ENCODE measurements at regions of chr15 and their contacts with region 1.

Region 1: GRCh38 chr15:92077353-92078085 is 224.0 kb downstream of the SLCO3A1 start:
- DNase-seq: peak; percentile 80 to 85
- ATAC-seq: peak; percentile 68
- H3K4me3 ChIP-seq: no peak overlapping the region
- H3K27ac ChIP-seq: no peak overlapping the region
- H3K4me1 ChIP-seq: no peaks in the 10 kb centered on the region
- H3K27me3 ChIP-seq: no peaks in the 10 kb centered on the region

Region 2: DNA sequence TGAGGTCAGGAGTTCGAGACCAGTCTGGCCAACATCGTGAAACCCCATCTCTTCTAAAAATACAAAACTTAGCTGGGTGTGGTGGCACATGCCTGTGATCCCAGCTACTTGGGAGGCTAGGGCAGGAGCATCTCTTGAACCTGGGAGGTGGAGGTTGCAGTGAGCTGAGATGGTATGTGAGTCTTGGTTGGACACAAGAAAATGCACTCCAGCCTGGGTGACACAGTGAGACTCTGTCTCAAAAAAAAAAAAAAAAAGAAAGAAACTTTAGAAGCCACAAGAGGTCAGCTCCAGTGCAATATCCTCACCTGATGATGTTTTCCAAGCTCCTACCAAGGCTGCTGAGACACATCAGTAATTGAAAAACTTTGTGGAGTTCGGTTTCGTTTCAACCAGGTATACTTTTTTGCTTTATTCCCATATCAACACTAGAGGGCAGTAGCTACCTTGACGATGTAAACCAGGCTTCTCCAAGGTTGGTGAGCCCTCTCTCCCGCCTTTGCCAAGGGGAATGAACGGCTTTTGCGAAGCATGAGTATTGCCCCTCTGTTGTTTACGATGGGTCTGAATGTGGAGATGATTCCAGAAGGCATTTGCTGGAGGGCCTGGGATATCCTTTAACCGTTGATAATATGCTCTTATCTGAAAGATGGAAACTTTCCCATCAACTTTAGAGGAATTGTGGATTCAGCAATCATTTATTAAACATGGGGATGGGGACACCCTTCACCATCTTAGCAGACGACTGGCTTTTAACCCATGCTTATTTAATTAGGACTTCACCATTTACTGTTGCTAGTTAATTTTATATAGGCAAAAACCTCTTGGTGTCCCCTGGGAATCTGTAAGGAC is 774.7 kb before region 1 on chr15:
- intact Hi-C with region 1: loop called (anchors 5 kb)
- DNase-seq: no peak
- ATAC-seq: peak; percentile 78
- H3K4me3 ChIP-seq: no peak overlapping the region
- H3K27ac ChIP-seq: no peak overlapping the region
- H3K4me1 ChIP-seq: no peaks in the 10 kb centered on the region
- H3K27me3 ChIP-seq: no peaks in the 10 kb centered on the region

Region 3: DNA sequence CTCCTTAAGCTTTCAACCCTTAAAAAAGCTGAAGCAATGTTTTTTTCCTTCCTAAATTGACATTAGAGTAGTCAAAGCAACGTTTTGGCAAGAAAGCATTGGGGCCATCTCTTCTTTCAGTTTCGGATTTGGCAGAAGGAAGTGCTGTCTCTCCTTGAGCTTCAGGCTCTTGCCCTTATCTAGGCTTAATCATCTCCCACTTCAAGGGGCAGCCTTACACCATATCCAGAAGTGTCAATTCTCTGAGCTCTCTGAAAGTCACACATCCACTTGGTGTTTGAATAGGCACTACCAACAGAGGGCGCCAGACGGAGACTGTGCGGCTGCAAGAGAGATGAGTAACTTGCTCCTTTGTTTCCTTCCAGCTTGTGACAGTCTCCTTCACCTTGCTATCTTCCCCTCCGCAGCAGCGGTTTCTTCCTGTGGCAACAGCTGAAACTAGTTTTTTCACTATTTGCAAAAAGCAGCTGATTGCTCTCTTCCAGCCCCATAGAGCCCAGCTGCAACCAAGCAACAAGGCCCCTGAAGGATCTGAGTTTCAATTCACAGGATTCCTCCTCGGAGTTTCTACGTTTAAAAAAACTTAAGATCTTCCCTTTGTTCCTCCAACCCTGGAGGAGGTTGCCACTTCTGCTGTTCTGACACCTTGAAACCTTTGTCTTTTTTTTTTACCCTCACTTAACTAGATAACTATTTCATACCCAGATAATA is 371.0 kb before region 1 on chr15:
- intact Hi-C with region 1: loop called (anchors 5 to 10 kb)
- DNase-seq: peak; percentile 84 to 87
- ATAC-seq: peak; percentile 86
- H3K4me3 ChIP-seq: no peak overlapping the region
- H3K27ac ChIP-seq: no peak overlapping the region
- H3K4me1 ChIP-seq: no peaks in the 10 kb centered on the region
- H3K27me3 ChIP-seq: no peaks in the 10 kb centered on the region

Region 4: DNA sequence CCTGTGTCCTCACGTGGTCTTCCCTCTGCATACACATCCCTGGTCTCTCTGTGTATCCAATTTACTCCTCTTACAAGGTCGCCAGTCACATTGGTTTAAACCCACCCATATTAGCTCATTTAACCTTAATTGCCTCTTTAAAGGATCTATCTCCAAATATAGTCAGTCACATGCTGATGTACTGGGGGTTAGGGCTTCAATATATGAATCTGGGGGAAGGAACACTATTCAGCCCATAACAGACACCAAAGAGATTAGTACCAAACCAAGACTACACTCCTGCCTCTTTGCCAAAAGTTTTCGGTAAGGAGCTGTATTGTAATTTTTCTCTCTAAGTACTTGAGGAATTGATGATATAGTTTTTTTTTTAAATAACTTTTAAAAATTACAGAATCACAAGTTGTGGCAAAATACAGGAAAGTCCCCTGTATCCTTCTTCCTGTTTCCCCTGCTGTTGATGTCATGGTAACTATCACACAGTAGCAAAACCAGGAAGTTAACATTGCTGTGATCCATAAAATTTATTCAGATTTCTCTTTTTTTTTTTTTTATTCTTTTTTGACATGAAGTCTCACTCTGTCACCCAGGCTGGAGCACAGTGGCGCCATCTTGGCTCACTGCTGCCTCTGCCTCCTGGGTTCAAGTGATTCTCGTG is 156.2 kb before region 1 on chr15:
- intact Hi-C with region 1: loop called in 1 of 2 experiments (anchors 5 kb)
- DNase-seq: no peak
- ATAC-seq: no peak
- H3K4me3 ChIP-seq: no peak overlapping the region
- H3K27ac ChIP-seq: no peak overlapping the region
- H3K4me1 ChIP-seq: peaks cover 0 to 12% of the 10 kb centered on the region in 2 donors
- H3K27me3 ChIP-seq: no peaks in the 10 kb centered on the region

Measured in aorta (tissue), 5 donors.